ENCODE measurements at regions of chr19 and their contacts with region 1.

Region 1: GRCh38 chr19:41144403-41144802 is 30.2 kb downstream of the CYP2F1 start:
- DNase-seq: peak; percentile 19
- H3K4me3 ChIP-seq: no peak overlapping the region
- CTCF ChIP-seq: peak; percentile 80

Region 2: GRCh38 chr19:40974633-40975037 is 169.8 kb before region 1 on chr19:
- CTCF ChIA-PET with region 1: interaction called, 29 read pairs
- POLR2A ChIA-PET with region 1: no interaction called
- DNase-seq: peak; percentile 5
- H3K4me3 ChIP-seq: no peak overlapping the region
- CTCF ChIP-seq: peak; percentile 79

Region 3: DNA sequence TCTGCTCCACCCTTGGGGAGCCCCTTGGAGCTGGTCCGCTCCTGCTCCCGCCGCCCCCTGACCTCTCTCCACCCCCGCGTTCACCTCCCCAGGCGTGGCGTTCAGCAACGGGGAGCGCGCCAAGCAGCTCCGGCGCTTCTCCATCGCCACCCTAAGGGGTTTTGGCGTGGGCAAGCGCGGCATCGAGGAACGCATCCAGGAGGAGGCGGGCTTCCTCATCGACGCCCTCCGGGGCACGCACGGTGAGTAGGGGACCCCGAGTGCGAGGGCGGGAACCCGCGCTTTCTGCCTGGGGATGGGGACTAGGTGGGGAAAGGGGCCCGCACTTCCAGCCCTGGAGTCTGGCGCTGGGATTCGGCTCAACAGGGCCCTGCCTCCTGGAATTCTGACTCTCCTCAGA is 54.4 kb before region 1 on chr19:
- CTCF ChIA-PET with region 1: no interaction called
- POLR2A ChIA-PET with region 1: no interaction called
- DNase-seq: no peak
- H3K4me3 ChIP-seq: no peak overlapping the region
- CTCF ChIP-seq: no peak

Region 4: GRCh38 chr19:41111296-41111695 is 33.1 kb before region 1 on chr19:
- CTCF ChIA-PET with region 1: no interaction called
- POLR2A ChIA-PET with region 1: no interaction called
- DNase-seq: no peak
- H3K4me3 ChIP-seq: no peak overlapping the region
- CTCF ChIP-seq: no peak

Region 5: DNA sequence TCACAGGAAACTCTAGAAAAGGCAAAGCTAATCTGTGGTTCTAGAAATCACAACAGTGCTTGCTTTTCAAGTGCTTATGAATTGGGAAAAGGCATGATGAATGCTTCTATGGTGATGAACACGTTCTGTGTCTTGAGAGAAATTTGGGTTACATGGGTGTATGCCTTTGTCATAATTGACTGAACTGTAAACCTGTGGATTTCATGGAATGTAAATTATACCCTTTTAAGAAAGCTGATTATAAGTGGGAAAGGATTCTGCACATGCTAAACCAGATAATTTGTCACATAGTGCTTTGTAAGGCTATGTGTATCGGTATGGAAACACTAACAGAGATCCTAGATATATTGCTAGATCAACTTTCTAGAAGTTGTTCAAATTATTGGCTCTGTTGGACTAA is 10.8 kb after region 1 on chr19:
- CTCF ChIA-PET with region 1: interaction called, 12 read pairs
- POLR2A ChIA-PET with region 1: no interaction called
- DNase-seq: no peak
- H3K4me3 ChIP-seq: no peak overlapping the region
- CTCF ChIP-seq: no peak

Measured in AG04449 (cell line).